PC-3 (cell line): ENCODE measurements at regions of chr17 and their contacts with region 1.

Region 1: DNA sequence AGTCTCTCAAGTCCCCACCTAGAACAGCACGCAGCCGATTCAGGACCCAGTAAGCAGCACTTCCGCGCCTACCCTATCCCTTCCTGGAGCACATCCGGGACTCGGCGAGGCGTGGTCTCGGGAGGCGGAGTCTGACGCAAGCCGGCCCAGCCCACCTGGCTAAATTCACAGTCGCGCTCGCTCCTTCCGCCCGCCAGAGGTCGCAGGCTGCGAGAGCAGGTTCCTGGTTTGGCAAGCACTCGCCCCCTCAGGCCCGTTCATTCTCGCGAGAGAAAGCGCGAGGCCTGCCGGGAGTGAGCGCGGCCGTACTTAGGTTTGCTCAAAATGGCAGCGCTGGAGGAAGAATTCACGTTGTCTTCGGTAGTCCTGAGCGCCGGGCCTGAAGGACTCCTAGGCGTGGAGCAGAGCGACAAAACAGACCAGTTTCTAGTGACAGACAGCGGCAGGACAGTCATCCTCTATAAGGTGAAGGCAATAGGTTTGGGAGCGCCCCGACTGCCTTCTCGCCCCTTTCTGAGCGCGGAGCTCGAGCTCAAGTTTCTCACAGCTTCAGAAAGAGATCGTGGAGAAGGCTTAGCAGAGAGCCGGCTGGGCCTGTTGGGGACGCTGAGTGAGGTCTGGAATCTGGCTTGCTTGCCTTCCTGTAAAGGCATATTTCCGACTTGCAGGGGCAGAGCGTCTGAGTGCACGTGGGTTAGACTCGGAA is at the start of gene NOL11:
- DNase-seq: peak; percentile 100
- ATAC-seq: peak; percentile 97
- H3K4me3 ChIP-seq: peak within 1 kb of the TSS; percentile 93
- H3K27ac ChIP-seq: peak within 1 kb of the TSS; percentile 79
- H3K4me1 ChIP-seq: peaks cover 22% of the 10 kb centered on the region
- H3K27me3 ChIP-seq: no peaks in the 10 kb centered on the region
- CTCF ChIP-seq: peak; percentile 94
- total RNA-seq, gene NOL11: 80.5 and 96.9 TPM in 2 replicates

Region 2: GRCh38 chr17:67276075-67276474 is 441.7 kb before region 1 on chr17:
- CTCF ChIA-PET with region 1: interaction called, 11 read pairs
- POLR2A ChIA-PET with region 1: no interaction called
- intact Hi-C with region 1: no loop called
- DNase-seq: peak; percentile 65
- ATAC-seq: peak; percentile 84
- H3K4me3 ChIP-seq: no peak overlapping the region
- H3K27ac ChIP-seq: no peak overlapping the region
- H3K4me1 ChIP-seq: no peaks in the 10 kb centered on the region
- H3K27me3 ChIP-seq: no peaks in the 10 kb centered on the region
- CTCF ChIP-seq: peak; percentile 60

Region 3: GRCh38 chr17:67671492-67671891 is 46.3 kb before region 1 on chr17:
- CTCF ChIA-PET with region 1: no interaction called
- POLR2A ChIA-PET with region 1: no interaction called
- intact Hi-C with region 1: no loop called
- DNase-seq: no peak
- ATAC-seq: peak; percentile 46; the same call in 1 of the 2 replicates
- H3K4me3 ChIP-seq: no peak overlapping the region
- H3K27ac ChIP-seq: no peak overlapping the region
- H3K4me1 ChIP-seq: no peaks in the 10 kb centered on the region
- H3K27me3 ChIP-seq: no peaks in the 10 kb centered on the region
- CTCF ChIP-seq: no peak

Region 4: GRCh38 chr17:67818110-67819002 is 100.6 kb after region 1 on chr17:
- CTCF ChIA-PET with region 1: no interaction called
- POLR2A ChIA-PET with region 1: interaction called, 20 read pairs
- intact Hi-C with region 1: loop called (anchors 5 kb)
- DNase-seq: peak; percentile 22
- ATAC-seq: no peak
- H3K4me3 ChIP-seq: no peak overlapping the region
- H3K27ac ChIP-seq: no peak overlapping the region
- H3K4me1 ChIP-seq: peaks cover 8% of the 10 kb centered on the region
- H3K27me3 ChIP-seq: no peaks in the 10 kb centered on the region
- CTCF ChIP-seq: no peak

Region 5: GRCh38 chr17:67824735-67825626 is 107.2 kb after region 1 on chr17 and contains the start of gene BPTF:
- CTCF ChIA-PET with region 1: no interaction called
- POLR2A ChIA-PET with region 1: interaction called, 3 read pairs
- intact Hi-C with region 1: loop called (anchors 5 kb)
- DNase-seq: peak; percentile 98
- ATAC-seq: peak; percentile 90
- H3K4me3 ChIP-seq: peak within 1 kb of the TSS; percentile 90
- H3K27ac ChIP-seq: peak within 1 kb of the TSS; percentile 81
- H3K4me1 ChIP-seq: peaks cover 25% of the 10 kb centered on the region
- H3K27me3 ChIP-seq: no peaks in the 10 kb centered on the region
- CTCF ChIP-seq: peak; percentile 89
- total RNA-seq, gene BPTF: 53.8 and 61.8 TPM in 2 replicates